A673 (cell line): ENCODE measurements at regions of chr19 and their contacts with region 1.

Region 1: DNA sequence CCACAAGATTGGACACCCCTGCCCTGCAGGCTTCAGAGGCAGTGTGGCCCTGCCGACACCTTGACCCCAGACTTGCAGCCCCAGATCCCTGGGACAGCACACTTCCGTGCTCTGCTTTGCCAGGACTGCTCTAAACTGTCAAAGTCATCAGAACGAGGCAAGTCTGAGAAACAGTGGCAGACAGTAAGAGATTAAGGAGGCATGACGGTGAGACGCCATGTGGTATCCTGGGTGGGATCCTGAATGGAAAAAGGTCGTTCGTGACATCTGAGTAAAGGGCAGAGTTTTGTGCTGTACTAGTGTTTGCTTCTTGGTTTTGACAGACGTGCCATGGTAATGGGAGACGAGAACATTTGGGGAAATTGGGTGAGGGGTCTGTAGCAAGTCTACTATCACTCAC is 13.8 kb downstream of the ZNF579 start:
- DNase-seq: no peak
- H3K4me3 ChIP-seq: no peak overlapping the region
- H3K27ac ChIP-seq: no peak overlapping the region
- H3K4me1 ChIP-seq: no peaks in the 10 kb centered on the region
- H3K27me3 ChIP-seq: no peaks in the 10 kb centered on the region
- CTCF ChIP-seq: no peak

Region 2: DNA sequence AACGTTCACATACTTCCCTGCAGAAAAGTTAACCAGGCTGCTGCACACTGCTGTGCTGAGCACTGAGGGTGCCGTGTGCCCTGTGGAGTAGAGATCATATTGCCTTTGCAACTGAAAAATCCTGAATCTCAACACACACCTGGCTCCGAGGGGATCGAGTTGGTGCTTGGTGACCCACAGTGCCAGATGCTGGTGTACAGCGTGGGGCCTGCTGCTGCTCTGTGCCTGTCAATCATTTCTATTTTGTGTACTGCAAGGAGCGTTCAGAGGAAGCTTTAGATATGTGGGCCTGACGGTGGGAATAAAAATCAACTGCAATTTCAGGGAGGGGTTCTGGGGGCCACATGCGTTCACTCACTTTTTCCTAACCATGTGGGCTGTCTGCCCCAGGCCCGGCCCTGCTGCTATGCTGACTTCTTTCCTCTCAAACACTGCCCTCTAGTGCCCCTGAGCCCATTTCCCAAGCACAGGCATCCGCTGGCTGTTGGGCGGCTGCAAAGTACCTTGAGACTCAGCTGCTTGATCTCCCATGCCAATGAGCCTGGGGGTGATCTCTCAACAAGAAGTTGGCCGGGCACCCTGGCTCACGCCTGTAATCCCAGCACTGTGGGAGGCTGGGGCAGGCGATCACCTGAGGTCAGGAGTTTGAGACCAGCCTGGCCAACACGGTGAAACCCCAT is 1127.5 kb before region 1 on chr19:
- CTCF ChIA-PET with region 1: no interaction called
- POLR2A ChIA-PET with region 1: interaction called, 17 read pairs
- intact Hi-C with region 1: no loop called
- DNase-seq: peak; percentile 56
- H3K4me3 ChIP-seq: no peak overlapping the region
- H3K27ac ChIP-seq: no peak overlapping the region
- H3K4me1 ChIP-seq: no peaks in the 10 kb centered on the region
- H3K27me3 ChIP-seq: no peaks in the 10 kb centered on the region
- CTCF ChIP-seq: peak; percentile 59

Region 3: GRCh38 chr19:55526216-55527196 is 40.3 kb before region 1 on chr19:
- CTCF ChIA-PET with region 1: no interaction called
- POLR2A ChIA-PET with region 1: interaction called, 19 read pairs
- intact Hi-C with region 1: no loop called
- DNase-seq: peak; percentile 21
- H3K4me3 ChIP-seq: no peak overlapping the region
- H3K27ac ChIP-seq: no peak overlapping the region
- H3K4me1 ChIP-seq: no peaks in the 10 kb centered on the region
- H3K27me3 ChIP-seq: no peaks in the 10 kb centered on the region
- CTCF ChIP-seq: no peak